ENCODE measurements at regions of chr1 and their contacts with region 1.

Region 1: DNA sequence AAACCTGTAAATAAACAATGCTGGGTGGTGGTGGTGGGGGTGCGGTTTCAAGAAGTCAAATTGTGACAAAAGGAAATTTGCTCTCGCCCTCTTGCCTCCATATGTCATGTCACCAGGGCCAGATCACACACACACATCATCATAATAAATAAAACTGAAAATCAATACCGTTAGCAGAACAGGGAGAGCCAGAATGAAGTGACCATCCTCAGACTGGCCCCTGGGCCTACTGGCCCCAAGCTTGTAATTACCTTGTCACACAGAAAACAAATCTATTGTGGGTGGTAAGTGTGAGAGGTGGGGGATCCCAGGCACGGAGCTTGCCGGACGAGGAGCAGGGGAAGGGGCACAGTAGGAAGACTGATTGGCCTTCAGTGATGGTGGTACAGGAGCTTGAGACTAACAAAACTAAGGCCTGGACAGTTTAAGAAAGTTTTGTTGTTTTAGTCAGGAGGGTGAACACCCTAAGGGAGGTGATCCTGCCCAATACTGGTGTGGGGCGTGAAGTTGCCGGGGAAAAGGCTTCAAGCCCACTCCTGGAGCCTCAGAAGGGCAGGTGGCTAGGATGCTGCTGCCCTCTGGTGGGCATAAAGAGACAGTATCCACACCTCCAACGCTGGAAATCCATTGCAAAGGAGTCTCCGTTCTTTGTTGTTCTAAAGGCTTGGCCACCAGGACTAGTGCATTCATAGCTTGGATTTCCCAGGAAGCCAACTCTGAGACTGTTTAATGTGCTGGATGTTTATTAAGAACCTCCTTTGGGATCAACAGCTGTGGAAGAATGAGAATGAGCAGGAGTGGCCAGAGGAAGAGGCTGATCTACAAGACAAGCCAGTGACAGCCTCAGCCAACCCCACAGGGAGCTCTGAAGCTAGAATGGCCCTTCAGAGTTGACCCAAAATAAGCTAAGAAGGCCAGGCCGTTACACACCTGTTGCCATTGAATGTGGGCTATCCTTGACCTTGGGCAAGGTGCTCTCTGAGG is 8.1 kb upstream of the C1orf216 start:
- ATAC-seq: peak; percentile 71 to 95 (median 83)
- H3K4me3 ChIP-seq: no peak overlapping the region
- H3K27ac ChIP-seq: peak overlapping the region; percentile 14 to 53
- H3K4me1 ChIP-seq: peaks cover 25 to 35% of the 10 kb centered on the region in 2 donors

Region 2: DNA sequence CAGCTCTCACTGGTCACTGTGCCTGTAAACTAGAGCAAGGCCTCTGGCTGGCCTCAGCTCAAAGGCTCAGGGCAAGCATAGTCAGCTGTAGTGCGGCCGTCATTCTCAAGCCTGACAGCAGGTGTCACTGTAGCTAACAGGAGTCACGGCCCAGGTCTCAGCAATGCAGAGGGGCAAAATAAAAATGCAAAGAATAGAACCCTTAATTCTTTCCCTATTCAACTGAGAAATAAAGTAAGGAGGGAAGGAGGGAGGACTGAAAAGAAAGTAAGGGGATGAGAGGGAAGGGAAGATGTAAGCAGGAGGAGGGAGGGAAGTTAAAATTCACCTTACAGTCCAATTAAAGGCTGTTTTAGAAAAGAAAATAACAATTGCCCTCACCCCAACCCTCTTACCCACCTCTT is 275.6 kb before region 1 on chr1:
- in situ Hi-C with region 1: loop called in 4 of 9 experiments (anchors 25 kb)
- ATAC-seq: peak; percentile 39 to 88 (median 85)
- H3K4me3 ChIP-seq: no peak overlapping the region
- H3K27ac ChIP-seq: no peak overlapping the region
- H3K4me1 ChIP-seq: no peaks in the 10 kb centered on the region

Region 3: GRCh38 chr1:35564037-35564883 is 162.5 kb before region 1 on chr1:
- in situ Hi-C with region 1: loop called in 5 of 9 experiments (anchors 10 to 25 kb)
- ATAC-seq: peak; percentile 39 to 77 (median 45)
- H3K4me3 ChIP-seq: no peak overlapping the region
- H3K27ac ChIP-seq: no peak overlapping the region
- H3K4me1 ChIP-seq: peaks cover under 1 to 2% of the 10 kb centered on the region in 2 donors

Region 4: GRCh38 chr1:35577071-35577998 is 149.4 kb before region 1 on chr1:
- in situ Hi-C with region 1: loop called in 4 of 9 experiments (anchors 10 to 25 kb)
- ATAC-seq: peak in 4 of 8 experiments; percentile 2 to 13 (median 8)
- H3K4me3 ChIP-seq: no peak overlapping the region
- H3K27ac ChIP-seq: no peak overlapping the region
- H3K4me1 ChIP-seq: peaks cover 0 to 6% of the 10 kb centered on the region in 2 donors